Left ventricle myocardium superior (tissue), 1 donor: ENCODE measurements at regions of chr1 and their contacts with region 1.

Region 1: GRCh38 chr1:210400043-210400840 is 71.5 kb downstream of the HHAT start:
- DNase-seq: peak; percentile 61
- ATAC-seq: peak; percentile 95

Region 2: GRCh38 chr1:210360852-210361477 is 39.3 kb before region 1 on chr1:
- intact Hi-C with region 1: loop called (anchors 5 kb)
- DNase-seq: no peak
- ATAC-seq: peak; percentile 59